Endothelial cell of umbilical vein (primary cell): ENCODE measurements at regions of chr12 and their contacts with region 1.

Region 1: DNA sequence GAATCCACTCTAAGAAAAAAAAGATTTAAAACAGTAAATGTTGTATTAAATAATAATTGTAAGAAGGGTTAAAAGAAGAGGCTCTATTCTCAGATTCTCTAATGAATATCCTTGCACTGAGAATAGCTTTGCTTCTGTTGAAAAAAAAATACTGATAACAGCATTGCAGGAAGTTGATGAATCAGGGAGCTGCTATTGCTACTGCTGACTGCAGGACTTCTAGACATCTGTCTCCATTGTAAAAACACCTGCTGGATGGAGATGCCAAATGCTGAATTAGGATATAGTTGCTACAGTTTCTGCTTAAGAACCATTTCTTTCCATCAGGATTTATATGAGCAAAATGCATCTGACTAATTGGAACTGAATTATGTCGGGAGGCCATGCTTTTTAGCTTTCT is 50.3 kb upstream of the ANP32D start:
- DNase-seq: peak; percentile 85
- H3K4me3 ChIP-seq: no peak overlapping the region
- H3K27ac ChIP-seq: peak overlapping the region; percentile 58
- H3K4me1 ChIP-seq: peaks cover 36% of the 10 kb centered on the region
- H3K27me3 ChIP-seq: no peaks in the 10 kb centered on the region
- CTCF ChIP-seq: no peak
- POLR2A ChIP-seq: no peak

Region 2: GRCh38 chr12:48311313-48311712 is 110.7 kb before region 1 on chr12:
- CTCF ChIA-PET with region 1: no interaction called
- POLR2A ChIA-PET with region 1: no interaction called
- dilution Hi-C with region 1: no loop called
- intact Hi-C with region 1: no loop called
- DNase-seq: no peak
- H3K4me3 ChIP-seq: no peak overlapping the region
- H3K27ac ChIP-seq: no peak overlapping the region
- H3K4me1 ChIP-seq: no peaks in the 10 kb centered on the region
- H3K27me3 ChIP-seq: peaks cover 5 to 6% of the 10 kb centered on the region in 2 experiments
- CTCF ChIP-seq: no peak
- POLR2A ChIP-seq: no peak

Region 3: GRCh38 chr12:48350249-48351021 is 71.6 kb before region 1 on chr12 and contains the start of gene ZNF641:
- CTCF ChIA-PET with region 1: no interaction called
- POLR2A ChIA-PET with region 1: no interaction called
- dilution Hi-C with region 1: no loop called
- intact Hi-C with region 1: loop called (anchors 2 kb)
- DNase-seq: peak; percentile 51
- H3K4me3 ChIP-seq: peak within 1 kb of the TSS; percentile 56 to 87 (median 63)
- H3K27ac ChIP-seq: no peak within 1 kb of the TSS
- H3K4me1 ChIP-seq: peaks cover 5% of the 10 kb centered on the region
- H3K27me3 ChIP-seq: no peaks in the 10 kb centered on the region
- CTCF ChIP-seq: no peak
- POLR2A ChIP-seq: peak; percentile 39
- total RNA-seq, gene ZNF641: 5.0 and 6.7 TPM in 2 replicates

Region 4: DNA sequence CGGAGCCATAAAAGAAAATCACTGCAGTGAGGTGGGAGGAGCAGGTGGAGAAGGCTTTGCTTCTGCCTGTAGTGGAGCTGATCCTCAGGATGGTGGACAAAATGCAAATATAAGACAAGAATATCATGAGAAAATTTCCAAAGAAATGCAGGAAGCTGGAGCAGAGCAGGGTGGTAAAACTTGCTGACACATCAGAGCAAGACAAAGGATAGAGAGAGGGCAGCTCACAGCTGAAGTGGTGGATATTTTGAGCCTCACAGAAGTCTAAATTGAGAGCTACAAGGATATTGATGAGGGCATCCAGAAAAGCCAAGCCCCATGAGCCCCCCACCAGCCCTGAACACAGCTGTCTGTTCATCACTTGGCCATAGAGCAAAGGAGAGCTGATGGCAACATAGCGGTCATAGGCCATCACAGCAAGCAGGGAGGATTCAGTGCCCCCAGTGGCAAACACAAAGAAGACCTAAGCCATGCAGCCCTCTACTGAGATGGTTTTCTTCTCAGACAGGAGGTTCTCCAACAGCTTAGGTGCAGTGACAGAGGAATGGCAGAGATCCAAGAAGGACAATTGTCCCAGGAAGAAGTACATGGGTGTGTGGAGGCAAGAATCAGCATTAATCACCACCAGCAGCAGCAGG is 20.2 kb after region 1 on chr12:
- CTCF ChIA-PET with region 1: no interaction called
- POLR2A ChIA-PET with region 1: no interaction called
- dilution Hi-C with region 1: no loop called
- intact Hi-C with region 1: loop called (anchors 2 kb)
- DNase-seq: no peak
- H3K4me3 ChIP-seq: no peak overlapping the region
- H3K27ac ChIP-seq: no peak overlapping the region
- H3K4me1 ChIP-seq: peaks cover 6% of the 10 kb centered on the region
- H3K27me3 ChIP-seq: no peaks in the 10 kb centered on the region
- CTCF ChIP-seq: peak in 1 of 2 donors; percentile 10
- POLR2A ChIP-seq: no peak